WTC11 (cell line): ENCODE measurements at regions of chr15 and their contacts with region 1.

Region 1: GRCh38 chr15:77543159-77543882 is 89.4 kb downstream of the LINGO1 start:
- DNase-seq: peak; percentile 90
- ATAC-seq: peak; percentile 76
- H3K4me3 Mint-ChIP-seq: no peak overlapping the region; the same call in 1 of the 2 replicates
- H3K27ac Mint-ChIP-seq: 0 out of 2 replicates have a peak overlapping the region, but pooled peaks have one; percentile 53
- H3K4me1 Mint-ChIP-seq: peaks cover 49% of the 10 kb centered on the region
- H3K27me3 Mint-ChIP-seq: peaks cover 5% of the 10 kb centered on the region
- CTCF ChIP-seq: peak; percentile 87

Region 2: GRCh38 chr15:77112838-77113504 is 430.4 kb before region 1 on chr15:
- CTCF ChIA-PET with region 1: interaction called, 131 read pairs
- POLR2A ChIA-PET with region 1: no interaction called
- DNase-seq: no peak
- ATAC-seq: peak; percentile 92
- H3K4me3 Mint-ChIP-seq: no peak overlapping the region
- H3K27ac Mint-ChIP-seq: no peak overlapping the region
- H3K4me1 Mint-ChIP-seq: peaks cover 3% of the 10 kb centered on the region; the same call in 1 of the 2 replicates
- H3K27me3 Mint-ChIP-seq: no peaks in the 10 kb centered on the region
- CTCF ChIP-seq: no peak

Region 3: DNA sequence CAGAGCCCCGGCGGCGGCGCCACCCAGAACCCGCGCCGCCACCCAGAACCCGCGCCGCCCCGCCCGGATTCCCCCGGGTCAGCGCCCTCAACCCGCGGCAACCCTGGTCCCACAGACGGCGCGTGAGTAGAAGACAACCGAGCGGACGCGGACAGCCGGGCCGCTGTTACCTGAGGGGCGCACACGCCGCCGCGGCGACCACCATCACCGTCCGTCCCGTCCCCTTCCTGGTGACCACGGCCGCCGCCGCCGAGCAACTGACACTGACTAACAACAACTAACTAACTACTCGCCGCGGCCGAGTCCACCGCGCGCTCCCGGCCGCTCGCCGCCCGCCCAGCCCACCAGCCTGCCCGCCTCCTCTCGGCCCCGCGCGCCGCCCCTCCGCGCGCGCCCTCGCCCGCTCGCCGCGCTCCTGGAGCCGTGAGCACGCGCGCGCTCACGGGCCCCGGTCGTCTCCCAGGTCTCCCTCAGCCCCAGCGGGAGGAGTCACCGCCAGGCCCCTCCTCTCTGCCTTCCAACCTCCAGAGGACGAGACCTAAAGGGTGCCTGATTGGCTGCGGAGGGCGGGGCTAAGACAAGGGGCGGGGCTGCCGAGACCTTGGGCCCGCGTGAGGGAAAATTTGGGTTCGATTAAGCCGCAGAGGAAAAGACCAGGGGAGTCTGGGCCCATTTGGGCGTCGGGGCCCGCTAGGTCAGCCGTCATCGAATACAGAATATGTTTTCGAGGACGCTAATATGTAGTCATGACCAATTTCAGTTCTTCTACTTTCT is 123.3 kb before region 1 on chr15 and contains the start of gene PEAK1:
- CTCF ChIA-PET with region 1: interaction called, 22 read pairs
- POLR2A ChIA-PET with region 1: no interaction called
- DNase-seq: peak; percentile 100
- ATAC-seq: peak; percentile 97
- H3K4me3 Mint-ChIP-seq: peak within 1 kb of the TSS; percentile 98
- H3K27ac Mint-ChIP-seq: peak within 1 kb of the TSS; percentile 99
- H3K4me1 Mint-ChIP-seq: peaks cover 46% of the 10 kb centered on the region
- H3K27me3 Mint-ChIP-seq: no peaks in the 10 kb centered on the region; the same call in 1 of the 2 replicates
- CTCF ChIP-seq: no peak
- total RNA-seq, gene PEAK1: 49.0 to 51.1 TPM (median 49.7 TPM) in 3 replicates

Region 4: DNA sequence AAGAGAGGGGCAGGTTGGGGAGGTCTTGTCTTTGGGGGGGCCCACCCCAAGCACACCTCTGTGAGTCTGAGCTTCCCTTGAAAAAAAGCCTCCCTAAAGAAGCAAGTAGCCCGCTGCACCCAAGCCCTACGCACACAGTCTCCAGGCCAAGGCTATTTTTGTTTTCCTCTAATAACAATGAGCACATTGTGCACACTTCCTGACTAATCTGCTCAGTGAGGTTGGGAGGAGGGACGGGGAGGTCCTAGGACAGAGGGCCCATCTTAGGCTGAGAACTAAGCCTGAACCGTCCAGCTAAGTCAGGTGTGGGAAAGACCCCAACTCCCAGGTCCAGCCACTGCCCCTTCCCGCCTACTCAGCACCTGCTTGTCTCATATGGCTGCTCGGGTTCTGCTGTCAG is 35.4 kb before region 1 on chr15:
- CTCF ChIA-PET with region 1: interaction called, 87 read pairs
- POLR2A ChIA-PET with region 1: interaction called, 6 read pairs
- DNase-seq: no peak
- ATAC-seq: no peak
- H3K4me3 Mint-ChIP-seq: no peak overlapping the region
- H3K27ac Mint-ChIP-seq: no peak overlapping the region
- H3K4me1 Mint-ChIP-seq: peaks cover 90% of the 10 kb centered on the region
- H3K27me3 Mint-ChIP-seq: no peaks in the 10 kb centered on the region
- CTCF ChIP-seq: no peak

Region 5: DNA sequence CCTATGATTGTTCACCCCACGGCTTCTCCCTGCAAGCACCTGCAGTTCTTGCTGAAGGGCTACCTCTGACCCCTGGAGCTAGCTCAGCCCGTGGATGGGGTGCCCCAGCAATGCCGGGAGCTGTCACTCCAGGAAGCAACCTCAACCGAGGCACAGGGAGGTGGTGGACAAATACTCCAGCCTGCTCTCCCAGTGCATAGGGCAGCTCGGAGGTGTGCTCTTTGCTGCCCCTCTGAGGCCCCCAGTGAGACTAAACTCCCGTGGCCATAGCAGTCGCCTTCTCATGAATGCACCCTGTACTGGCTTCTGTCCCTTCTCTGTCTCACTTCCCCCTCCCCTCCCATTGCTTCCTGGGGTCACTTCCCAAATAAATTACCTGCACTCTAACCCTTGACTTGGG is 40.9 kb after region 1 on chr15:
- CTCF ChIA-PET with region 1: interaction called, 10 read pairs
- POLR2A ChIA-PET with region 1: no interaction called
- DNase-seq: peak; percentile 53
- ATAC-seq: peak; percentile 94
- H3K4me3 Mint-ChIP-seq: no peak overlapping the region
- H3K27ac Mint-ChIP-seq: no peak overlapping the region
- H3K4me1 Mint-ChIP-seq: peaks cover 5% of the 10 kb centered on the region; the same call in 1 of the 2 replicates
- H3K27me3 Mint-ChIP-seq: no peaks in the 10 kb centered on the region
- CTCF ChIP-seq: no peak

Region 6: GRCh38 chr15:77821188-77821958 is 278.1 kb after region 1 on chr15:
- CTCF ChIA-PET with region 1: interaction called, 25 read pairs
- POLR2A ChIA-PET with region 1: no interaction called
- DNase-seq: peak; percentile 82
- ATAC-seq: peak; percentile 72
- H3K4me3 Mint-ChIP-seq: peak overlapping the region; percentile 52; the same call in 1 of the 2 replicates
- H3K27ac Mint-ChIP-seq: no peak overlapping the region
- H3K4me1 Mint-ChIP-seq: peaks cover 29% of the 10 kb centered on the region
- H3K27me3 Mint-ChIP-seq: peaks cover 46% of the 10 kb centered on the region
- CTCF ChIP-seq: peak; percentile 42; the same call in 1 of the 2 replicates

Region 7: DNA sequence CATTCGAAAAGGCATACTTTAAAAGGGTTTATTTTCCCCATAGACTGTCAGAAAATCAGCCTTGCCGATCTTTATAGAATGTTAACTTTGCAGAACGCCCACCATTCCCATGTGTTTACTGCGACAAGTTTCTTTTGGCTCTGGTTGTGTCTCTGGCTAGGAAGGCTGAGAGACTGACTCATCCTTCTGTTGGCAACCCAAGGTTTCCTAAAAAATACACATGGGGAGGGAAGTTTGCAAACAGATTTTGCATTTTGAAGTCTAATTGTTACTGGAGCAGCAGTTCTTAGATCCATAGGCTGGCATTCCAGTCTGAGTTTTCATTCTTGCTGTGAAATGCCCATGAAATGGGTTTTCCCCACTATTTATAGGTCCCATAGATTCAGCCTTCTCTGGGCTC is 1850.9 kb after region 1 on chr15:
- CTCF ChIA-PET with region 1: no interaction called
- POLR2A ChIA-PET with region 1: no interaction called
- DNase-seq: no peak
- ATAC-seq: no peak
- H3K4me3 Mint-ChIP-seq: no peak overlapping the region
- H3K27ac Mint-ChIP-seq: no peak overlapping the region
- H3K4me1 Mint-ChIP-seq: no peaks in the 10 kb centered on the region
- H3K27me3 Mint-ChIP-seq: no peaks in the 10 kb centered on the region
- CTCF ChIP-seq: no peak